ENCODE measurements at regions of chr3 and their contacts with region 1.

Region 1: GRCh38 chr3:130892759-130893375 is 1.0 kb upstream of the ATP2C1 start:
- DNase-seq: peak; percentile 70 to 73
- H3K4me3 ChIP-seq: peak overlapping the region; percentile 78 to 91
- H3K27ac ChIP-seq: peak overlapping the region; percentile 93 to 99
- H3K4me1 ChIP-seq: peaks cover 0 to 32% (median 11%) of the 10 kb centered on the region in 4 donors
- H3K27me3 ChIP-seq: no peaks in the 10 kb centered on the region
- CTCF ChIP-seq: peak; percentile 81 to 87

Region 2: DNA sequence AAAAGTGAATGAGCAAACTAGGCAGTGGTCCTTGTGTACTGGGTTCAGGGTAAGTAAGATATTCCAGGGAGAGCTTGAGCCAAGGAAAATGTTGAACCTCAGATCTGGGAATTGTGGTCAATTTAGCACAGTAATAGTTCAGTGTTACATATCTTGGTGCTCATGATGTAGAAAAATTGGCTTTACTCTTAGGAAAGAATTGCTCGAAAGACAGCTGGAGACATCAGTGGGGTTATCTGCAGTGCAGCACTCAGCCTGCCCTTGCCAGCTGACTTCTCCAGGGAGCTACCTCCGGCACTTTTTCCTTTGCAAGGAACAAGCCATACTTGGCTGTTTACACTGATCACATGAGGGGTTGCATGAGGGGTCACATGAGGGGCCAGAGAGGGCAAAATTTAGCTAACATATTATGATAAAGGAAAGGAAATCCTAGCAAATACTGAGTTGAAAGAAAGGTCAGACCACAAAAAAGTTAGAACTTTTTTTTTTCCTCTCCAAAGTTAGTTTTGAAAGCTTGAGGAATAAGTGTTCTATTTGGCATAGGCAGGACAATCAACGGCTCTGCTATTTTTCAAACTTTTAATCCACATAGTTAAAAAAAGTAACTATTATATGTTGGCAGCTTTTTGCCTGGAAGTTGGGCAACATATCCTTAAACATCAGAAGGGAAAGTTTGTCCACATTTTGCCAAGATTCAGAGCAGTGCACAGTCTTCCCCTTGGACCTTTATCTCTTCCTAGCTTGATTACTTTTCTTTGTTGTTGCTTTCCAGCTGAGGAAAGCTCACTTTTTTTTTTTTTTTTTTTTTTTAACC is 283.5 kb before region 1 on chr3:
- intact Hi-C with region 1: no loop called
- DNase-seq: peak; percentile 40 to 68
- H3K4me3 ChIP-seq: no peak overlapping the region
- H3K27ac ChIP-seq: no peak overlapping the region
- H3K4me1 ChIP-seq: no peaks in the 10 kb centered on the region
- H3K27me3 ChIP-seq: no peaks in the 10 kb centered on the region
- CTCF ChIP-seq: no peak

Region 3: DNA sequence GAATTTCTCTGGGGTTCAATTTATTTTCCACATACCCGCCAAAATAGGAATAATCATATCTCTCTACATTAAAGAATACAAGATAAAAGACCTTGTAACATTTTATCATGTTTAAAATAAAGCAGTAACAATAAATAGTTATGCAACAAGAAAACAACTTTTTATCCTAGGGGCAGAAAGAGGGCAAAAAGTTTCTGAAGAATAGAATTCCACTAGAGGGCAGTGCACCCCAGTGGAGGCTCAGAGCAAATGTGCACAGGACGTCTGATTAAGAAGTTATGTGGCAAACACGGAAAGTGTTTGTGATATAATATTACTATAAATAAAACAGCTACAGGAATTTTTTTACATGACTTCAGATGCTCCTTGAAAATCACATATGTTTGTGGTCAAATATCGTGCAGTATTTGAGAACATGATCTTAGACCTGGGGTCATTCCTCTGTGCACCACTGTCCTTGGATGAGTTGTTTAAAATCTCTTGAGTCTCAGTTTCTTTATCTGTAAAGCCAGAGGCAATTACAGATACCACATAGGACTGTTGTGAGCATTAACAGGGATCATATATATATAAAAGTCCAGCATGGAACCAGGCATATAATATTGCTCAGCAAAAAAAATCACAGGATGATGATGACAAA is 133.0 kb before region 1 on chr3:
- intact Hi-C with region 1: loop called (anchors 5 kb)
- DNase-seq: peak in 1 of 2 donors; percentile 36
- H3K4me3 ChIP-seq: no peak overlapping the region
- H3K27ac ChIP-seq: no peak overlapping the region
- H3K4me1 ChIP-seq: no peaks in the 10 kb centered on the region
- H3K27me3 ChIP-seq: peaks cover 0 to 6% of the 10 kb centered on the region in 2 donors
- CTCF ChIP-seq: peak; percentile 65 to 76

Region 4: DNA sequence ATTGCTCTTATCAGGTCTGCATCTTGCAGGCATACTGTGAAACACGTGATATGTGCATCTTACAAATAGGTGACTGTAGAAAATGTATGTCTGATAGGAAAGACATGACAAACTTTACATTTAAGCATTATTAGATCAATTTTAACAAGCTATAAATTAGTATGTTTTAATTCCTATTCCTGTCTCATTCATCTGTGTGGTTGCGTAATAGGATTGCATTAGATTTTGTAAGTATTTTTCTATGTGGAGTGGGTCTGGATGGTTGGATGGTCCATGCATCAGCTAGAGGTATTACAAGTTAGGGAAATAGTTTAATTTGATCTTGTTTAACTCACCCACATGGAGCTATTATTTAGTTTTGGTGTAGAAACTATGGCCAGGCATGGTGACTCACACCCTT is 114.9 kb after region 1 on chr3:
- intact Hi-C with region 1: no loop called
- DNase-seq: no peak
- H3K4me3 ChIP-seq: no peak overlapping the region
- H3K27ac ChIP-seq: no peak overlapping the region
- H3K4me1 ChIP-seq: peaks cover 0 to 4% (median 2%) of the 10 kb centered on the region in 4 donors
- H3K27me3 ChIP-seq: no peaks in the 10 kb centered on the region
- CTCF ChIP-seq: no peak

Region 5: GRCh38 chr3:131381444-131382291 is 488.8 kb after region 1 on chr3 and contains the start of gene NUDT16:
- intact Hi-C with region 1: loop called (anchors 10 kb)
- DNase-seq: peak; percentile 100
- H3K4me3 ChIP-seq: peak within 1 kb of the TSS; percentile 85 to 96
- H3K27ac ChIP-seq: peak within 1 kb of the TSS; percentile 94 to 98
- H3K4me1 ChIP-seq: peaks cover 0 to 32% (median 17%) of the 10 kb centered on the region in 4 donors
- H3K27me3 ChIP-seq: no peaks in the 10 kb centered on the region
- CTCF ChIP-seq: no peak